IMR-90 (cell line): ENCODE measurements at regions of chr3 and their contacts with region 1.

Region 1: GRCh38 chr3:66407611-66408218 is 93.1 kb downstream of the LRIG1 start:
- DNase-seq: peak; percentile 55
- ATAC-seq: peak; percentile 50; the same call in 1 of the 2 replicates
- H3K4me3 ChIP-seq: no peak overlapping the region
- H3K27ac ChIP-seq: no peak overlapping the region
- H3K4me1 ChIP-seq: peaks cover 25% of the 10 kb centered on the region
- H3K27me3 ChIP-seq: no peaks in the 10 kb centered on the region
- CTCF ChIP-seq: peak; percentile 80
- POLR2A ChIP-seq: no peak
- RAD21 ChIP-seq: peak; percentile 91

Region 2: DNA sequence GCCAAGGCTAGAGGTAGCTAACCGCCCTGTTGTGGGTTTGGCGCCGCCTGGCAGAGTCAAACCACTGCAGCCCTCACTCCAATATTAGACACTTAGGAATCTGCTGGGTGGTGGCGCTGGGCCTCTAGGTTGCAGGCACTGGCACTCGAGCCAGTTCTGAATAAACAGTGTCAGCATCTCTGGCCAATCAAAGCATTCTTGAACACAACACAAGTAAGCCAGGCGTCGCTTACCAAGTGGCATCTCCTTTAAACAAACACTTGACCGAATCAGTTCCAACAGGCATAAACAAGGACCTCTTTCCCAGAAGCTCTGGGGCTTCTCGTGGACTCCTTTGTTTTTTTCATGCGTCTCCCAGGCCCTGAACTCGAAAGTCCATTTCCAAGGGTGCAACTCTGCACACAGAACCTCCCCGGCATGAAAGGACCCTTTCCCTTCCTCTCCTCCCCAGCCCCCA is 10.8 kb after region 1 on chr3:
- CTCF ChIA-PET with region 1: interaction called, 13 read pairs
- POLR2A ChIA-PET with region 1: no interaction called
- dilution Hi-C with region 1: no loop called
- in situ Hi-C with region 1: no loop called
- intact Hi-C with region 1: no loop called
- DNase-seq: no peak
- ATAC-seq: peak; percentile 51
- H3K4me3 ChIP-seq: no peak overlapping the region
- H3K27ac ChIP-seq: peak overlapping the region; percentile 25; the same call in 1 of the 2 replicates
- H3K4me1 ChIP-seq: peaks cover 19% of the 10 kb centered on the region
- H3K27me3 ChIP-seq: no peaks in the 10 kb centered on the region
- CTCF ChIP-seq: no peak
- POLR2A ChIP-seq: no peak
- RAD21 ChIP-seq: no peak

Region 3: GRCh38 chr3:66738625-66739365 is 331.1 kb after region 1 on chr3:
- CTCF ChIA-PET with region 1: interaction called, 3 read pairs
- POLR2A ChIA-PET with region 1: no interaction called
- dilution Hi-C with region 1: no loop called
- in situ Hi-C with region 1: no loop called
- intact Hi-C with region 1: loop called (anchors 10 kb)
- DNase-seq: peak; percentile 87
- ATAC-seq: peak; percentile 87
- H3K4me3 ChIP-seq: no peak overlapping the region
- H3K27ac ChIP-seq: peak overlapping the region; percentile 16; the same call in 1 of the 2 replicates
- H3K4me1 ChIP-seq: peaks cover 9% of the 10 kb centered on the region
- H3K27me3 ChIP-seq: no peaks in the 10 kb centered on the region
- CTCF ChIP-seq: no peak
- POLR2A ChIP-seq: no peak
- RAD21 ChIP-seq: no peak

Region 4: DNA sequence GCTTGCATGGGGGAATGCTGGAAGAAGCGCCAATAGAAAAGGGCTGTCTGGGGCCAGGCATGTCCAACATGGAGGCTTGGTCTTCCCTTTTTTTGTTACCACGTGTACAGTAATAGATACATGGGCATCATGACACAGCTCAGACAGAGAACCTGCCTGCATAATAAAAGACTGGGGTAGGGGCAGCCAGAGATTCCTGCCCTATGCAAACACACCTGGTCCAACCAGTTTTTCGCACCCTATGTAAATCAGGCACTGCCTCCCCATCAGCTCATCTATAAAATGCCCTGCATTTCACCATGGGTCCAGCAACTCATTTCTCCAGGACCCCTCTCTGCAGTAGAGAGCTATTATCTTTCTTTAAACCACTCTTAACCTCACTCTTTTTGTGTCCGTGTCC is 856.2 kb after region 1 on chr3:
- CTCF ChIA-PET with region 1: no interaction called
- POLR2A ChIA-PET with region 1: no interaction called
- dilution Hi-C with region 1: no loop called
- in situ Hi-C with region 1: no loop called
- intact Hi-C with region 1: no loop called
- DNase-seq: no peak
- ATAC-seq: no peak
- H3K4me3 ChIP-seq: no peak overlapping the region
- H3K27ac ChIP-seq: no peak overlapping the region
- H3K4me1 ChIP-seq: no peaks in the 10 kb centered on the region
- H3K27me3 ChIP-seq: no peaks in the 10 kb centered on the region
- CTCF ChIP-seq: no peak
- POLR2A ChIP-seq: no peak
- RAD21 ChIP-seq: no peak